Heart right ventricle (tissue), 16 donors: ENCODE measurements at regions of chr18 and their contacts with region 1.

Region 1: DNA sequence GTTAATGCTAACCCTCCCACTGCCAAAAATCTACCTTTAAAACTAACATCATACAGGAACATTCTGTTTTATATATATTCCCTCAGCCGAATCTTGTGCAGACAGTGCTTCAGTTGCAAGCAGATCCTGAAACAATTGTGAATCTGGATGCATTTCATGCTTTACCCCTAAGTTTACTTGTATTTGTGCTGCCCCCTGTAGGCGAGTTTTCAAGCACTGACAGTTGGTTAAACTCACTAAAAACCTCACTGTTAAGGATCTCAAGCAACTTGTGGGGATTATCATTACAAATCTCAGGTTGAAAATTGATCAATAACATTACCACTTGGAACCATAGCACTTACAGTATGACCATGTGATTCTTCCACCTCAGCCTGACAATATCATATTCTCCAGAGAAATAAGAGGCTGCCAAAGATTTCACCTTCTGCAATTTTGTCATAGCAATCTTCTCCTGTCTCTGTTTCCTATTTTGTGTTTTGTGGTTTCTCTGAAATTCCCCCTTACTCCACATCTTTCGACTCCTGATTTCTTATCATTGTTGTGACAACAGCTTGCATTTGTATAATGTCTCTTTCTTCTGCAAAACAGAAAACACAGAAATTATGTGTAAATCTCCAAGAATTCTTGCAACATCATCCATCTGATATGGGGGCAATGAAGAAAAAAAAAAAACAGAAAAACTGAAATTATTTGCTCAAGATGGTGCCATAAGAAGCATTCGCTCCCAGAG is 354.6 kb upstream of the SETBP1 start:
- DNase-seq: peak in 1 of 2 donors; percentile 27
- ATAC-seq: no peak
- H3K4me3 ChIP-seq: no peak overlapping the region
- H3K27ac ChIP-seq: no peak overlapping the region
- H3K4me1 ChIP-seq: no peaks in the 10 kb centered on the region
- H3K27me3 ChIP-seq: no peaks in the 10 kb centered on the region
- CTCF ChIP-seq: peak; percentile 11 to 64 (median 51)

Region 2: DNA sequence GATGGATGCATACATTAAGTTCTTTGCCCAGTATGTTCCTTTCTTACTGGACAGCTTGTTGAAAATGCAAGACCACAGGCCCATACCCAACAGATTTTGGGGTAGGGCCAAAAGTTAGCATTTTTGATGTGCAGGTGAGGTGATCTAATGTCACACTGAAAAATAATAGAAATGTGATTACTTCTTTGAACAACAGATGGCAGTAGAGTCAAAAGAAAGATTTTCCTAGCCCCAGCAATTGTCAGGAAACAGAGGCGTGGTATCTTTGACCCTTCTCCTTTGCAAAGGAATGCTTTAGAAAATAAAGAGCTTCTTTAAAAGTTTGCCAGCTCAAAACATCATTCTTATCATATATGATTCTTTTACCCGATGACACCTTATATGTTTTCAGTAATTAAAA is 705.1 kb before region 1 on chr18:
- intact Hi-C with region 1: loop called in 2 of 10 experiments (anchors 5 to 10 kb)
- DNase-seq: no peak
- ATAC-seq: peak in 3 of 8 donors; percentile 27 to 53 (median 45)
- H3K4me3 ChIP-seq: no peak overlapping the region
- H3K27ac ChIP-seq: no peak overlapping the region
- H3K4me1 ChIP-seq: no peaks in the 10 kb centered on the region
- H3K27me3 ChIP-seq: no peaks in the 10 kb centered on the region
- CTCF ChIP-seq: peak in 8 of 9 donors; percentile 19 to 73 (median 61)

Region 3: GRCh38 chr18:43789234-43790000 is 536.7 kb before region 1 on chr18:
- intact Hi-C with region 1: loop called in 3 of 10 experiments (anchors 5 to 10 kb)
- DNase-seq: peak in 1 of 2 donors; percentile 7
- ATAC-seq: peak in 5 of 8 donors; percentile 42 to 77 (median 55)
- H3K4me3 ChIP-seq: no peak overlapping the region
- H3K27ac ChIP-seq: no peak overlapping the region
- H3K4me1 ChIP-seq: peaks cover 0 to 3% (median 0%) of the 10 kb centered on the region in 9 donors
- H3K27me3 ChIP-seq: no peaks in the 10 kb centered on the region
- CTCF ChIP-seq: peak in 7 of 9 donors; percentile 9 to 65 (median 47)

Region 4: GRCh38 chr18:44123743-44124142 is 202.3 kb before region 1 on chr18:
- intact Hi-C with region 1: loop called in 1 of 10 experiments (anchors 10 kb)
- DNase-seq: no peak
- ATAC-seq: no peak
- H3K4me3 ChIP-seq: no peak overlapping the region
- H3K27ac ChIP-seq: no peak overlapping the region
- H3K4me1 ChIP-seq: no peaks in the 10 kb centered on the region
- H3K27me3 ChIP-seq: no peaks in the 10 kb centered on the region
- CTCF ChIP-seq: no peak

Region 5: GRCh38 chr18:44130376-44130942 is 195.6 kb before region 1 on chr18:
- intact Hi-C with region 1: loop called in 4 of 10 experiments (anchors 5 to 10 kb)
- DNase-seq: peak in 1 of 2 donors; percentile 21
- ATAC-seq: peak in 4 of 8 donors; percentile 34 to 53 (median 48)
- H3K4me3 ChIP-seq: no peak overlapping the region
- H3K27ac ChIP-seq: no peak overlapping the region
- H3K4me1 ChIP-seq: no peaks in the 10 kb centered on the region
- H3K27me3 ChIP-seq: no peaks in the 10 kb centered on the region
- CTCF ChIP-seq: peak; percentile 40 to 77 (median 64)

Region 6: DNA sequence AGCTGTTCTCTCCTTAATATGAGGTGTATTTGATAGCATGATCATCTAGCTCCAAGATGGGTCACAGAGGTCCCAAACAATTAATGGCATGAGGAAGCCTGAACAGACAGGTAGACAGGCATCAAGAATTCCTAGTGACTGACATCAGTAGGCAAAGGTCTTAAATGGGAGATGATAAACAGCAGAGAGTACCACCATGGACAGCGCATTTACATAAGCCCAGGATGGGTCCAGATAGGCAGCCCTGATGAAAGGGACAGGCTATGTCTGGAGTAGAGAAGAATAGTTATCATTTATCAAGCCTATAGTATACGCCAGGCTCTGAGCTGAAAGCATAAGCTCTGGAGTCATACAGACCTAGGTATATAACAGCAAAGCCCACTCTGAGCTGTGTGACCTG is 80.1 kb before region 1 on chr18:
- intact Hi-C with region 1: no loop called
- DNase-seq: no peak
- ATAC-seq: no peak
- H3K4me3 ChIP-seq: no peak overlapping the region
- H3K27ac ChIP-seq: no peak overlapping the region
- H3K4me1 ChIP-seq: no peaks in the 10 kb centered on the region
- H3K27me3 ChIP-seq: no peaks in the 10 kb centered on the region
- CTCF ChIP-seq: no peak